HEK293 (cell line): ENCODE measurements at regions of chr19 and their contacts with region 1.

Region 1: DNA sequence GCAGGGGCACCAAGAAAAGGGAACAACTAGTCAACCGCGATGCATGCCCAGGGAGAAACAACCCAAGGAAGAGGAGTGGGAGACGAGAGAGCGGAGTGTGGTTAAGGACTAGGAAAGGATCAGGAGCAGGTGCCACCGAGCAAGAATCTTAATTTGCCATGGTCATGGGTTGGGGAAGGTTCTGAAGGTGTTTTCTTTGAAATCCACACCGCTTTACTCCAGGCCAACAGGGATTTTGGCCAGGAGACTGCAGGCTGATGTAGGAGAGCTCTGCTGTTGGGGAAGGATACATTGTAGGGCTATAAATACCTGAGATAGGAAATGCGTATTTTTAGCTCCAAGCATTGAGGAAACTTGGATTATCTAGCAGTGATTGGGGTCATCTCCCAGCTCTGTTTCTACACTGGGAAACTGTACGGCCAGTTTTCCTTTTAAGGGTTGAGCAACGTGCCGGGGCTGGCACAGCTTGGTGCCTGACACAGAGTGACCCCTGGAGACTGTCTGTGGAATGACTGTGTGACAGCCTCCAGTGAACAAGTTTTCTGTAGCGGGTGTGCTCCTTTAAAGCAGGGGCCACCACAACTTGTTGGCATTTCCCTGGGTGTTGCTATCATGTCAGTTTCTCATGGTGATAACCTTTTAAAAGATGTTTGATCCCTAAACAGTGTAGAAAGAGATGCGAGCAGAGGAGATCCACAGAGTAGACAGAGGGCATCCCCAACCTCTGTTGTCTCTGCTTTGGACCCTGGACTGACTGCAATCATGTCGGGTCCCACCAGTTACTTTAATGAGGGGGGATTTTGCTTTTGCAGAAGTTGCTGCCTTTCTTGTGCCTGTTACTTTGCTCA is 34.3 kb downstream of the ZNF536 start:
- H3K4me3 ChIP-seq: no peak overlapping the region
- H3K27ac ChIP-seq: no peak overlapping the region
- H3K4me1 ChIP-seq: peaks cover 5% of the 10 kb centered on the region
- CTCF ChIP-seq: peak; percentile 60

Region 2: GRCh38 chr19:30391554-30392551 is 14.6 kb before region 1 on chr19:
- CTCF ChIA-PET with region 1: interaction called, 15 read pairs
- POLR2A ChIA-PET with region 1: interaction called, 3 read pairs
- H3K4me3 ChIP-seq: no peak overlapping the region
- H3K27ac ChIP-seq: peak overlapping the region; percentile 29; the same call in 1 of the 2 replicates
- H3K4me1 ChIP-seq: peaks cover 22% of the 10 kb centered on the region
- CTCF ChIP-seq: no peak

Region 3: GRCh38 chr19:30471441-30471840 is 65.0 kb after region 1 on chr19:
- CTCF ChIA-PET with region 1: no interaction called
- POLR2A ChIA-PET with region 1: no interaction called
- H3K4me3 ChIP-seq: no peak overlapping the region
- H3K27ac ChIP-seq: no peak overlapping the region
- H3K4me1 ChIP-seq: no peaks in the 10 kb centered on the region
- CTCF ChIP-seq: no peak